H1 (cell line): ENCODE measurements at regions of chr2 and their contacts with region 1.

Region 1: GRCh38 chr2:216057688-216058193 is 23.9 kb downstream of the PECR start:
- DNase-seq: no peak
- H3K4me3 ChIP-seq: no peak overlapping the region
- H3K27ac ChIP-seq: no peak overlapping the region
- H3K4me1 ChIP-seq: no peaks in the 10 kb centered on the region
- H3K27me3 ChIP-seq: no peaks in the 10 kb centered on the region
- CTCF ChIP-seq: no peak
- EP300 ChIP-seq: no peak
- POLR2A ChIP-seq: no peak
- RAD21 ChIP-seq: no peak

Region 2: GRCh38 chr2:216108967-216109921 is 51.5 kb after region 1 on chr2 and contains the start of gene XRCC5:
- CTCF ChIA-PET with region 1: interaction called, 10 read pairs
- POLR2A ChIA-PET with region 1: interaction called, 3 read pairs
- DNase-seq: peak; percentile 98
- H3K4me3 ChIP-seq: peak within 1 kb of the TSS; percentile 87 to 99 (median 97)
- H3K27ac ChIP-seq: peak within 1 kb of the TSS; percentile 92
- H3K4me1 ChIP-seq: peaks cover 4 to 12% (median 10%) of the 10 kb centered on the region in 4 experiments; a peak in 6 of 7 replicates
- H3K27me3 ChIP-seq: no peaks in the 10 kb centered on the region
- CTCF ChIP-seq: no peak
- EP300 ChIP-seq: no peak; a peak in 1 of 3 replicates
- POLR2A ChIP-seq: peak; percentile 65 to 77
- RAD21 ChIP-seq: no peak
- total RNA-seq, gene XRCC5: 597 and 644 TPM in 2 replicates